Activated CD4-positive, alpha-beta memory T cell treated with anti-CD3 and anti-CD28 coated beads, Interleukin-2, amount 10 ng/mL, durations not matched to agents 7 days and 5 days (primary cell): ENCODE measurements at regions of chr11 and their contacts with region 1.

Region 1: GRCh38 chr11:123429913-123430720 is at the start of gene GRAMD1B:
- DNase-seq: peak; percentile 88
- H3K4me3 Mint-ChIP-seq: peak within 1 kb of the TSS; percentile 98
- H3K27ac Mint-ChIP-seq: peak within 1 kb of the TSS; percentile 94
- H3K4me1 Mint-ChIP-seq: peaks cover 52% of the 10 kb centered on the region
- H3K27me3 Mint-ChIP-seq: no peaks in the 10 kb centered on the region
- total RNA-seq, gene GRAMD1B: 91.6 to 91.8 TPM

Region 2: DNA sequence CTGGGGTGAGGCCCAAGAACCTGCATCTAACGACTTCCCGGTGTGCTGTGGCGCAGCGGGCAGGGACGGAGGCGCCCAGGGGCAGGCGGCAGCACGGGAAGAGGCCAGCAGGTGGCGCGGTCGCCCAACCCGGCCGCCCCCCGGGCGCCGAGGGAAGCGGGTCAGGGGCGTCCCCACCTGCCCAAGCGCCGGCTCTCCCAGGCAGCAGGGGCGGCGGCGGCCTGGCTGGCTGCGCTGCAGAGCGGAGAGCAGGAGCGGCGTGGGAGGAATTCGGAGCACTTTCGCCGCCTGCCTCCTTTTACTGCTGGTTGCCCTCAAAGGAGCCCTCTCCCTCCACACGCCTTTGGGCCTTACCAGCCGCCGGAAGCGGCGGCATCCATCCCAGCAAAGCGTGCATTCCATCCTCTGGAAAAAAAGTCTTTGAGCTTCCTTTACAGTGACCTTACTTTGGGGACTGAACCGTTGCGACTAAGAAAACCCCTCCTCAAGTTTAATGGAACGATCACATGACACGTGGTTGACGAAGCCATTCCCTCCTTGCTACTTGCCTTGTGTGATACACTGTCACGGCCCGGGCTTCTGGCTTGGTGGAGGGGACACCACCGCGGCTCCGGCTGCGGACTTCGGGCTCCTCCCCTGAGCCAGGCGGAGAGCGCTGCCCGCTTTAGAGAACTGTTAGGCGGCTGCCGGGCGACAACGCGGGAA is 128.3 kb before region 1 on chr11:
- CTCF ChIA-PET with region 1: interaction called, 19 read pairs
- POLR2A ChIA-PET with region 1: interaction called, 3 read pairs
- DNase-seq: peak; percentile 78
- H3K4me3 Mint-ChIP-seq: peak overlapping the region; percentile 56
- H3K27ac Mint-ChIP-seq: peak overlapping the region; percentile 59
- H3K4me1 Mint-ChIP-seq: peaks cover 47% of the 10 kb centered on the region
- H3K27me3 Mint-ChIP-seq: peaks cover 3% of the 10 kb centered on the region

Region 3: GRCh38 chr11:123357961-123358841 is 71.9 kb before region 1 on chr11:
- CTCF ChIA-PET with region 1: interaction called, 13 read pairs
- POLR2A ChIA-PET with region 1: interaction called, 3 read pairs
- DNase-seq: peak; percentile 66
- H3K4me3 Mint-ChIP-seq: peak overlapping the region; percentile 87
- H3K27ac Mint-ChIP-seq: peak overlapping the region; percentile 66
- H3K4me1 Mint-ChIP-seq: peaks cover 58% of the 10 kb centered on the region
- H3K27me3 Mint-ChIP-seq: peaks cover 5% of the 10 kb centered on the region

Region 4: DNA sequence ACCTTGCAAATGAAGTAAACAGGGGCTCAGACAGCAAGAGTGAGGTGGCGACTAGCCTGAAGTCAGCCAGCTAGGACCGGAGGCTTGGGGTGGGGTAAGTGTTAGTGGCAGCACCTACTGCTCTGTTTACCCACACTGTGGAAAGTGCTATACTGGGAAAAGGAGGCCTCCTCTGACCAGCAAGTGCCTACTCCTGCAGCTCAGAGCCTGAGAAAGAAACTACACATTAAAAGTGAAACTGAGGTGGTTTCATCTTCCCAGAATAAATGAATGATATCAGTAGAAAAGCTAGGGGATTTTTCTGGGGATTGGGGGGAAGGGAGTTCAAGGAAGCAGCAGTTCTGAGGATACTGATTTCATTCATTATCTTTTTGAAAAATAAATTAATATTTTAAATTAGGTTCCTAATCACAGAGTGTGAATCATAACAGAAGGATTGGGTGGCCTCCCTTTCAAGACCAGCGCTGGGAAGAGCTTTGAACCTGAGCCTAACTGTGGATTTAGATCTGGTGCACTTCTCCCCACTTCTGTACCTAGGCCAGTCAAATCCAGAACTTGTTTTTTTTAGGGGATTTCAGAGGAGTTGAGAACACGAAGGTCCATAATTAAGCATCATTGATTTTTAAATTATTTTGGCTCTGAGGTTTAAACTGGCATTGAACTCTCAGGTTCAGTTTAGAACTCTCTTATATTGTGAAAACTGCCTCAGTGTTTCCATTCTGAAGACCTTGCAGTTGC is 48.1 kb before region 1 on chr11:
- CTCF ChIA-PET with region 1: interaction called, 6 read pairs
- POLR2A ChIA-PET with region 1: interaction called, 17 read pairs
- DNase-seq: peak; percentile 78
- H3K4me3 Mint-ChIP-seq: peak overlapping the region; percentile 49
- H3K27ac Mint-ChIP-seq: no peak overlapping the region
- H3K4me1 Mint-ChIP-seq: peaks cover 43% of the 10 kb centered on the region
- H3K27me3 Mint-ChIP-seq: no peaks in the 10 kb centered on the region

Region 5: GRCh38 chr11:123454060-123454651 is 24.0 kb after region 1 on chr11:
- CTCF ChIA-PET with region 1: interaction called, 67 read pairs
- POLR2A ChIA-PET with region 1: interaction called, 147 read pairs
- DNase-seq: peak; percentile 88
- H3K4me3 Mint-ChIP-seq: peak overlapping the region; percentile 59
- H3K27ac Mint-ChIP-seq: peak overlapping the region; percentile 87
- H3K4me1 Mint-ChIP-seq: peaks cover 94% of the 10 kb centered on the region
- H3K27me3 Mint-ChIP-seq: no peaks in the 10 kb centered on the region

Region 6: GRCh38 chr11:123478352-123478987 is 48.4 kb after region 1 on chr11:
- CTCF ChIA-PET with region 1: interaction called, 32 read pairs
- POLR2A ChIA-PET with region 1: interaction called, 7 read pairs
- DNase-seq: peak; percentile 39
- H3K4me3 Mint-ChIP-seq: peak overlapping the region; percentile 29
- H3K27ac Mint-ChIP-seq: peak overlapping the region; percentile 69
- H3K4me1 Mint-ChIP-seq: peaks cover 67% of the 10 kb centered on the region
- H3K27me3 Mint-ChIP-seq: no peaks in the 10 kb centered on the region